ENCODE measurements at regions of chrX and their contacts with region 1.

Region 1: DNA sequence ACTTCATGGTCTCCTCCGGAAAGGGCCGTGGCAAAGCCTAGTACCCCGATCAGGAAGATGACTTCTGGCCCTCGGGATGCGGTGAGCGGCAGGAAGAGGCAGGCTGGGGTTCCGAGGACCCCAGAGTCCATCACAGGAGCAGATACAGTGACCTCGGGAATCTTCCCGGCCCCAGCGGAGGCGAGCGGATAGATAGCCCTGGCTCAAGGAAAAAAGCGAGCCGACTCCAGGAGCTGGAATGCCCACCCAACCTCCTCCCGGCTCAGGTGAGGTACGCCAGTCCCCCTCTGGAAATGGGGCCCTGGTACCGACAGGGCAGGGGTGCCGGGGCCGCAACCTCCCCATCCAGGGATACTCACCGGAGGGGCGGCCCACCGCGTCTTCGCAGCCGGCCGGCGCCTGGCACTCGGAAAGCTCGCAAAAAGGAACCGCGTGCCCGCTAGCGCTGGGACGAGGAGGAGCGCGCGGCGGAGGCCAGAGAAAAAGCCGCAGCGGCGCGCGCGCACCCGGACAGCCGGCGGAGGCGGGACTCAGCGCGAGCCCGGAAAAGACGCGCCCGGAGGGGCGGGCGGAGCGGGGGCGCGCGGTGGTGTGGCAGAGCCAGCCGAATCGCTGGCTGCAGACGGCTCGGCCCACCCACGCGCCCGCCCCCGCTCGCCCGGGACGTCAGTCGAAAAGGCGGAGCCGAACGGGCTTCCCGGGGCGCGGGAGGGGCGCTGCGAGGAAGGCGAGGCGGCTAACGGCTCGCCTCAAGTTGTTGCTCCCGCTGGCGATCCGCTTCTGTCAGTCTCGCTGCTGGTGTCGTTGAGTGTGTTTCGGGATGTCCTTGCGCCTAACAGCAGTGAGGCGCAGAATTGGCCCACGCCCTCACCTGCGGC is at the start of gene ACSL4:
- DNase-seq: peak; percentile 65 to 92 (median 82)
- ATAC-seq: peak; percentile 86
- H3K4me3 ChIP-seq: peak within 1 kb of the TSS; percentile 96
- H3K4me3 Mint-ChIP-seq: peak within 1 kb of the TSS; percentile 94
- H3K27ac ChIP-seq: peak within 1 kb of the TSS; percentile 69 to 82
- H3K27ac Mint-ChIP-seq: peak within 1 kb of the TSS; percentile 91
- H3K4me1 ChIP-seq: peaks cover 4% of the 10 kb centered on the region
- H3K4me1 Mint-ChIP-seq: peaks cover 47% of the 10 kb centered on the region
- H3K27me3 ChIP-seq: no peaks in the 10 kb centered on the region
- H3K27me3 Mint-ChIP-seq: no peaks in the 10 kb centered on the region
- CTCF ChIP-seq: no peak
- total RNA-seq, gene ACSL4: 11.1 to 14.5 TPM

Region 2: GRCh38 chrX:109536439-109537336 is 196.3 kb before region 1 on chrX and contains the start of gene NXT2:
- CTCF ChIA-PET with region 1: no interaction called
- POLR2A ChIA-PET with region 1: interaction called, 5 read pairs
- intact Hi-C with region 1: loop called in 1 of 2 experiments (anchors 5 kb)
- DNase-seq: peak; percentile 68 to 94 (median 81)
- ATAC-seq: peak; percentile 98
- H3K4me3 ChIP-seq: peak within 1 kb of the TSS; percentile 79
- H3K4me3 Mint-ChIP-seq: peak within 1 kb of the TSS; percentile 84
- H3K27ac ChIP-seq: peak within 1 kb of the TSS; percentile 81 to 92
- H3K27ac Mint-ChIP-seq: peak within 1 kb of the TSS; percentile 88
- H3K4me1 ChIP-seq: peaks cover 2% of the 10 kb centered on the region
- H3K4me1 Mint-ChIP-seq: peaks cover 13% of the 10 kb centered on the region
- H3K27me3 ChIP-seq: peaks cover 2 to 3% of the 10 kb centered on the region in 2 experiments
- H3K27me3 Mint-ChIP-seq: peaks cover 26% of the 10 kb centered on the region
- CTCF ChIP-seq: no peak
- total RNA-seq, gene NXT2: 4.0 to 4.1 TPM

Region 3: GRCh38 chrX:109709129-109709631 is 23.8 kb before region 1 on chrX:
- CTCF ChIA-PET with region 1: interaction called, 8 read pairs
- POLR2A ChIA-PET with region 1: interaction called, 14 read pairs
- intact Hi-C with region 1: no loop called
- DNase-seq: peak in 3 of 14 experiments; percentile 8 to 28 (median 11)
- ATAC-seq: peak; percentile 57
- H3K4me3 ChIP-seq: no peak overlapping the region
- H3K4me3 Mint-ChIP-seq: peak overlapping the region; percentile 27
- H3K27ac ChIP-seq: no peak overlapping the region
- H3K27ac Mint-ChIP-seq: peak overlapping the region; percentile 37
- H3K4me1 ChIP-seq: peaks cover 9% of the 10 kb centered on the region
- H3K4me1 Mint-ChIP-seq: peaks cover 62% of the 10 kb centered on the region
- H3K27me3 ChIP-seq: no peaks in the 10 kb centered on the region
- H3K27me3 Mint-ChIP-seq: no peaks in the 10 kb centered on the region
- CTCF ChIP-seq: no peak

Region 4: DNA sequence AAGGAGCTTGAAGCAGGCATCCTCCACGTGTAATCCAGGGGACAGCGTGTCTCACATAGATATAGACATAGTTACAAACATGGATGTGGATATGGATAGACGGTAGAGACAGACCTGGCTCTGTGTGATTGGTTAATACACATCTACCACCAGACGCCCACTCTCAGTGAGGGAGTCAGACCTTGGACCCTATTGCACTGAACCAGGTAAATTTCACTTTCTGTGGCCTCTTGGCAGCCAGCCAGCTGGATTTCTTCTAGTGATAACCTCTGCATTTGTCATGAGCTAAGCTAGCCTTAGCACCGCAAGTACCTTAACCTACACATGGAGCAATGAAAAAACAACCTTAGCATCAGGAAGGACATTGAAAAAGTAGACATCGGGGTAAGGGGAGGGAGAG is 79.2 kb after region 1 on chrX:
- CTCF ChIA-PET with region 1: no interaction called
- POLR2A ChIA-PET with region 1: no interaction called
- intact Hi-C with region 1: no loop called
- DNase-seq: no peak
- ATAC-seq: no peak
- H3K4me3 ChIP-seq: no peak overlapping the region
- H3K4me3 Mint-ChIP-seq: no peak overlapping the region
- H3K27ac ChIP-seq: no peak overlapping the region
- H3K27ac Mint-ChIP-seq: no peak overlapping the region
- H3K4me1 ChIP-seq: no peaks in the 10 kb centered on the region
- H3K4me1 Mint-ChIP-seq: no peaks in the 10 kb centered on the region
- H3K27me3 ChIP-seq: no peaks in the 10 kb centered on the region
- H3K27me3 Mint-ChIP-seq: no peaks in the 10 kb centered on the region
- CTCF ChIP-seq: no peak

Region 5: GRCh38 chrX:110002300-110003166 is 269.5 kb after region 1 on chrX and contains the start of gene TMEM164:
- CTCF ChIA-PET with region 1: no interaction called
- POLR2A ChIA-PET with region 1: no interaction called
- intact Hi-C with region 1: loop called in 1 of 2 experiments (anchors 5 kb)
- DNase-seq: peak; percentile 59 to 89 (median 76)
- ATAC-seq: peak; percentile 82
- H3K4me3 ChIP-seq: peak within 1 kb of the TSS; percentile 81
- H3K4me3 Mint-ChIP-seq: peak within 1 kb of the TSS; percentile 97
- H3K27ac ChIP-seq: peak within 1 kb of the TSS in 1 of 2 donors; percentile 29
- H3K27ac Mint-ChIP-seq: peak within 1 kb of the TSS; percentile 84
- H3K4me1 ChIP-seq: peaks cover 27% of the 10 kb centered on the region
- H3K4me1 Mint-ChIP-seq: peaks cover 44% of the 10 kb centered on the region
- H3K27me3 ChIP-seq: no peaks in the 10 kb centered on the region
- H3K27me3 Mint-ChIP-seq: no peaks in the 10 kb centered on the region
- CTCF ChIP-seq: no peak
- total RNA-seq, gene TMEM164: 11.1 to 13.4 TPM

Region 6: DNA sequence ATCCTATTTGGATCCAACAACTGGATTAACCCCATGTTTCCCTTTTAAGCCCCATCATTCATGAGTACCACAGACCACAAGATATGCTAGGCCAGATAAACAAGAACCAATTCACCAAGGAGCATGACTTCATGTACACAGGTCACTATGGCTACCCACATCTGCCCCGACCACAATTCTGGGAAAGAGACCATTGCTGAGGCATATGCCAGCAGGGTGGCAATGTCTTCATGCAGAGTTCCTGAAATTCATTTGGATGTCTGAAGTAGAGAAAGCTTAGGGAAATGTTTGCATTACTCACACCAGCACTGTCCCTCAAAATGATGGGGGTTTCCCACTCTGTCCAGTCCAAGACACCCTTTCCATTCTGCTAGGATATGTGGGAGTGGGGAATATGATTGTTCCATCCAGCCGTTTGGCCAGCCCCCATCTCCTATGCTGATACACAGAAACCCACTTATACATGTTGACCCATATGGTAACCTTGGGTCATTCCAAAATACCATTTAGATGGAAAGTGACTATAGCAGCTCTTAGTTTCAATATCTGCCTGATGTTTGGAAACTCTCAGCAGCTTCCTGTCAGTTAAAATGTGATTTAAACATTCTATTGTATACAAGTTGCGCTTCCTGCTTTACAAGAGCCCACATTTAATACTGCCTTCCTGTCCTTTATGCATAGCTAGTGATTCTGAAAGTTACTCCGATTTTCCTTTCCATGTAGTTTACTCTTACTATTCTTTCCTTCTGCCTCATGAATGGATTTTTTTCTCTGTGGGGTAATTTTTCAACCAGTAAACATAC is 455.9 kb after region 1 on chrX:
- CTCF ChIA-PET with region 1: no interaction called
- POLR2A ChIA-PET with region 1: no interaction called
- intact Hi-C with region 1: no loop called
- DNase-seq: peak in 1 of 14 experiments; percentile 39
- ATAC-seq: no peak
- H3K4me3 ChIP-seq: no peak overlapping the region
- H3K4me3 Mint-ChIP-seq: peak overlapping the region; percentile 34
- H3K27ac ChIP-seq: peak overlapping the region in 1 of 2 donors; percentile 44
- H3K27ac Mint-ChIP-seq: peak overlapping the region; percentile 76
- H3K4me1 ChIP-seq: peaks cover 9% of the 10 kb centered on the region
- H3K4me1 Mint-ChIP-seq: peaks cover 26% of the 10 kb centered on the region
- H3K27me3 ChIP-seq: no peaks in the 10 kb centered on the region
- H3K27me3 Mint-ChIP-seq: no peaks in the 10 kb centered on the region
- CTCF ChIP-seq: no peak

Region 7: DNA sequence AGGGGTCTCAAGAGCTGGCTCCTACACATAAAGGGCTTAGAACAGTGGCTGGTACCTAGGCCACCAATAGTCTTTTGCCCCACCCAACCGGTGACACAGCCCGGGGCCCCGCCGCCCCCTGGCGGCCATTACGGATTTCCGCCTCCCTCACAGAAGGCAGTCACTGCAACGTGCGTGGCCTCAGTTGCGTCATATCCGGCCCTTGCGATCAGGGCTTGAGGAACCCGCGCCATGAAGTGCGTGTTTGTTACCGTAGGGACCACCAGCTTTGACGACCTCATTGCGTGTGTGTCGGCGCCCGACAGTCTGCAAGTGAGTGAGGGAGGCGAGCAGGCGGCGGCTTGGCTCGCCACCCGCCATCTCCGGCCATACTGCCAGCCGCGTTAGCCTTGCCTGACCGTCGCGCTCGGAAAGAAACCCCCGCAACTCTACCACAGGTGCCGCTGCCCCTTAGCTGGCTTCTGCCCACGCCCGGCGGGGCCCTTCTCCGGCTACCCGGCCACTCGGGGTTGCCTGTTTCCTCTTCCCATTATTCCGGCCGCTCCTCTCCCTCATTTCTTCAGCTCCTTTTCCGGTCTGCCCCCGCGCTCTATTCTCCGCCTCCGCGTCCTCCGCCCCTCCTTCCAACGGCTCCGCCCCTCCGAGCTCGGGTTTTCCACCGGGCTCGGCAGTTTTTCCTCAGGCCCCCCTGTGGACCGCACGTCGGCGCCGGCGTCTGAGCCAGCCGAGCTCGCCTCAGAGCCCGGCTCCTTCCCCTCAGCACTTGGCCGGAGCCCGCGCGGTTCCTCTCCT is 1948.2 kb after region 1 on chrX and contains the start of gene ALG13:
- CTCF ChIA-PET with region 1: no interaction called
- POLR2A ChIA-PET with region 1: no interaction called
- intact Hi-C with region 1: loop called in 1 of 2 experiments (anchors 10 kb)
- DNase-seq: peak; percentile 79 to 96 (median 85)
- ATAC-seq: peak; percentile 88
- H3K4me3 ChIP-seq: peak within 1 kb of the TSS; percentile 97
- H3K4me3 Mint-ChIP-seq: peak within 1 kb of the TSS; percentile 97
- H3K27ac ChIP-seq: peak within 1 kb of the TSS; percentile 95 to 100
- H3K27ac Mint-ChIP-seq: peak within 1 kb of the TSS; percentile 99
- H3K4me1 ChIP-seq: peaks cover 18% of the 10 kb centered on the region
- H3K4me1 Mint-ChIP-seq: peaks cover 48% of the 10 kb centered on the region
- H3K27me3 ChIP-seq: no peaks in the 10 kb centered on the region
- H3K27me3 Mint-ChIP-seq: no peaks in the 10 kb centered on the region
- CTCF ChIP-seq: peak; percentile 64
- total RNA-seq, gene ALG13: 82.2 to 86.2 TPM

Region 8: DNA sequence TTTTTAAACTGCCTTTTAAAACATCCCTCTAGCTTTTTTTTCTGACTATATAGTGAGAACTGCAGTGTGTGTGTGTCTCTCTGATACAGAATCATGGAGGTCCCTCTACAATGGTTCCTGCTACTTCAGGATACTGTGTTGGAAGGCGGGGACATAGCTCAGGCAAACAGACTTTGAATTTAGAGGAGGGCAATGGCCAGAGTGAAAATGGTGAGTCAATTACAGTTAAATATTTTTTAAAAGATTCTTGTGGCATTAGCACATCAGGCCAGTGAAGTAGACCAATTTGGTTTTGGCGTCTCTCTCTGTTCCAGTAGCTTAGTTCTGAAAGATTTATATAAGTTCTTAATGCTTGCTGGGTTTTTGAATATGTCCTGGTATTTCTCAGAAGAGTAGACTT is 1995.1 kb after region 1 on chrX:
- CTCF ChIA-PET with region 1: no interaction called
- POLR2A ChIA-PET with region 1: no interaction called
- intact Hi-C with region 1: no loop called
- DNase-seq: no peak
- ATAC-seq: no peak
- H3K4me3 ChIP-seq: no peak overlapping the region
- H3K4me3 Mint-ChIP-seq: no peak overlapping the region
- H3K27ac ChIP-seq: no peak overlapping the region
- H3K27ac Mint-ChIP-seq: no peak overlapping the region
- H3K4me1 ChIP-seq: no peaks in the 10 kb centered on the region
- H3K4me1 Mint-ChIP-seq: no peaks in the 10 kb centered on the region
- H3K27me3 ChIP-seq: no peaks in the 10 kb centered on the region
- H3K27me3 Mint-ChIP-seq: no peaks in the 10 kb centered on the region
- CTCF ChIP-seq: no peak

Measured in CD4-positive, alpha-beta T cell (primary cell).